Activated CD4-positive, alpha-beta T cell treated with anti-CD3 and anti-CD28 coated beads, Interleukin-2, amount 10 ng/mL, durations not matched to agents 24 days and 14 days (primary cell): ENCODE measurements at regions of chr2 and their contacts with region 1.

Region 1: DNA sequence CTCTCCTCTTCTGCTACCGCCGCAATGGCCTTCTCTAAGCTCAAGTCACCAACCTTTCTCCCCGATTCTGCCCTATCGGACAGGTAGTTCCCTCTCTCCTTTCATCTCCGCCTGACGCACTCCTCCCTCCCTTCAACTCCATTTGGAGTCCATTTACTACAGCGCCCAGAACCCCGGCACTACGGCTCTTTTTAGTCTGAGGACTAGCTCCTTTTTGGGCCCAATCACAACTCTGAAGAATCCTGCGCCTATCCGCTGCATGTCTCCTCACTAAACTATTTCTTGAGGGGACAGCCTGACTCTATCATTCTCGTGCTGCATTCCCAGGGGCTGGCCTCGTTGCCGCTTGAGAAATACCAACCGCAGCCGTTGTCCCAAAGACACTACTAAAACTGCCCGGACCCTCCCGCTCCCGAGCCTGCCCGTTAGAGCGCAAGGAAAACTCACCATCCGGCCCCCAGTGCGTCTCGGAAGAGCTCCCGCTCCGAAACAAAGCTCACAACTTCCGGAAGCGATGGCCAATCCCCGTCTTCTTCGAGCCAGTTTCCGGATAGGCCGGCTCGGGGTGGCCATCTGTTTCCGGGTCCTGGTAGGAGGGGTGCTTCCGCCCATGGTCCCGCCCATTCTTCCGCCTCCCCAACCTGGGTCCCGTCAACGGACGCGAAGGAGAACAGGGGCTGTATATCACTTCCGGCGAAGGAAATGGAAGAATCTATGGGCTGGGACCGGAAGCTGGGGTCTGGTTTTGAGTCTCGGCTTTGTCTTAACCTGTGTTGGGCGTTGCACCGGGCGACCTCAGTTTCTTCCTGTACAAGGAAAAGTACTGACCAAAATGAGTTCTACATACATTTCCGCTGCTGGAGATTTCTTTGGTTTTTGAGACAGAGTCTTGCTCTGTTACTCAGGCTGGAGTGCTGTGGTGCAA is at the start of gene TPRKB:
- DNase-seq: peak; percentile 98
- H3K4me3 Mint-ChIP-seq: peak within 1 kb of the TSS; percentile 100
- H3K27ac Mint-ChIP-seq: peak within 1 kb of the TSS; percentile 91
- H3K4me1 Mint-ChIP-seq: peaks cover 10% of the 10 kb centered on the region
- H3K27me3 Mint-ChIP-seq: no peaks in the 10 kb centered on the region
- total RNA-seq, gene TPRKB: 37.6 and 38.5 TPM in 2 replicates

Region 2: DNA sequence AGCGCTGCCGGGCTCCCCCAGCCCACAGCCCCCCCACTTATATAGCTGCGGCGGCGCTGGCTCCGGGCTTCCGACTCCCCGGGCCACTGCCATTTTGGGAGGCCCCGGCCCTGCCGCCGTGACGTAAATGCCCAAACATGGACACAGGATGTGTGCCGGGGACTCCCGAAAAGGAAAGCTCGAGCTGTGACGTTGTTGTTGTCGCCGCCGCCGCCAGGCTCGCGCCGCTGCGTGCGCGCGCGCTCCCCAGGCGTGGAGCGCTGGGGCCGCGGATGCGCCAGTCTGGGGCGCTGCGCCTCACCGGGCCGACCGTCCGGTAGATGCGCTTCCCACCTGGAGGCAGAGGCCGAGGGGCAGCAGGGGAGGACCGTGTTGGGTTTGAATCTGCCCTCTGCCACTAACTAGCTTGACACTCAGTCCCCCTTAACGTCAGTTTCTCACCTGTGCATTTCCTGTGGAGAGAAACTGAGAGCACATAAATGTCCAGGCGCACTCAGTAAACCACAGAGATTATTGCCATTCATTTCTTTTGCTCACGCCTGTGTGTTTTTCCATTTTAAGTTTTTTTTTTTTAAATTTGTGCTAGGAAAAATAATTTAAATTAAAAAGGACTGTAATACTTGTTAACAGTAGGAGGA is 443.5 kb before region 1 on chr2 and contains the start of gene EGR4:
- intact Hi-C with region 1: loop called (anchors 5 kb)
- DNase-seq: peak; percentile 98
- H3K4me3 Mint-ChIP-seq: peak within 1 kb of the TSS; percentile 81
- H3K27ac Mint-ChIP-seq: no peak within 1 kb of the TSS
- H3K4me1 Mint-ChIP-seq: peaks cover 13% of the 10 kb centered on the region
- H3K27me3 Mint-ChIP-seq: peaks cover 74% of the 10 kb centered on the region
- total RNA-seq, gene EGR4: 1.2 and 1.5 TPM in 2 replicates

Region 3: DNA sequence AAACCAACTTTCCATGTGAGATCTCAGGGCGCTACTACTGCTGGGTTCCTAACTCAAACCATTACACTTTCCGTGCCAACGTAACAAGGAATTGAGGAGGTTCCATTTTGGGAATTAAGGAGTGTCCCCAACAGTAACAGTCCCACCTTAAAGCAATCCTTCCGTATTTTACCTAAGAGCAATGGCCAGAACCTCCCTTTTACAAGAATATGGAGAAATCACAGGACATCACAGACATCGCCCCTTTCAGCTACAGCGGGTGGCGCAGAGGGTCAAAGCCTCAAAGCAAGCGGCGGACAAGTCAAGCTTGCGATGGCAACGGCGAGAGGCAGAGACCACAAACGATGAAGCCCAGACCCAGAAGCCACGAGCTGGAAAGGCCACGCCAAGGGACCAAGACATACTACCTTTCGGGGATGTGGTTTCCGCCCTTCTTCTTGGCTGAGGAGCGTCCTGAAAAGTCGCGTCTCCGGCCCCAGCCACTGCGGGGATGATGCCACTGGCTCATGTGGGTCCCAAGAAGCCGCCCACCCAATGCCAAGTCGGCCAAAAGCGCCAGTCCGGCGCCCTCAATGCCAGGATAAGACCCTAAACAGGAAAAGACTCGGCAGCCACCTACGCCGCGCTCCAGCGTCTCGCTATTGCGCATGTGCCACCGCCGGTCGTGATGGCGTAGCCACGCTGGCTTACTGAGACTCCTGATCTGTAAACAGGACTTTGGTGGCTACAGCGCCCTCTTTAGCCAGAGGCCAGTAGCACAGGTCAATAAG is 42.5 kb after region 1 on chr2 and contains the start of gene DUSP11:
- intact Hi-C with region 1: loop called (anchors 1 kb)
- DNase-seq: peak; percentile 99
- H3K4me3 Mint-ChIP-seq: peak within 1 kb of the TSS; percentile 91
- H3K27ac Mint-ChIP-seq: peak within 1 kb of the TSS; percentile 93
- H3K4me1 Mint-ChIP-seq: peaks cover 13% of the 10 kb centered on the region
- H3K27me3 Mint-ChIP-seq: peaks cover 4% of the 10 kb centered on the region
- total RNA-seq, gene DUSP11: 38.1 and 39.5 TPM in 2 replicates

Region 4: GRCh38 chr2:73939419-73939818 is 202.3 kb after region 1 on chr2:
- intact Hi-C with region 1: no loop called
- DNase-seq: peak; percentile 67
- H3K4me3 Mint-ChIP-seq: no peak overlapping the region
- H3K27ac Mint-ChIP-seq: no peak overlapping the region
- H3K4me1 Mint-ChIP-seq: peaks cover 46% of the 10 kb centered on the region
- H3K27me3 Mint-ChIP-seq: no peaks in the 10 kb centered on the region

Region 5: GRCh38 chr2:74119912-74120825 is 383.1 kb after region 1 on chr2:
- intact Hi-C with region 1: loop called (anchors 1 kb)
- DNase-seq: peak; percentile 96
- H3K4me3 Mint-ChIP-seq: peak overlapping the region; percentile 88
- H3K27ac Mint-ChIP-seq: peak overlapping the region; percentile 92
- H3K4me1 Mint-ChIP-seq: peaks cover 9% of the 10 kb centered on the region
- H3K27me3 Mint-ChIP-seq: peaks cover 7% of the 10 kb centered on the region